Activated CD4-positive, alpha-beta T cell treated with anti-CD3 and anti-CD28 coated beads for 36 hours (primary cell): ENCODE measurements at regions of chr6 and their contacts with region 1.

Region 1: GRCh38 chr6:138692058-138692977 is 81.3 kb upstream of the CCDC28A start:
- DNase-seq: peak; percentile 74
- ATAC-seq: peak; percentile 63
- H3K4me3 Mint-ChIP-seq: peak overlapping the region; percentile 68
- H3K27ac Mint-ChIP-seq: no peak overlapping the region
- H3K4me1 Mint-ChIP-seq: peaks cover 10% of the 10 kb centered on the region
- H3K27me3 Mint-ChIP-seq: peaks cover 29% of the 10 kb centered on the region

Region 2: DNA sequence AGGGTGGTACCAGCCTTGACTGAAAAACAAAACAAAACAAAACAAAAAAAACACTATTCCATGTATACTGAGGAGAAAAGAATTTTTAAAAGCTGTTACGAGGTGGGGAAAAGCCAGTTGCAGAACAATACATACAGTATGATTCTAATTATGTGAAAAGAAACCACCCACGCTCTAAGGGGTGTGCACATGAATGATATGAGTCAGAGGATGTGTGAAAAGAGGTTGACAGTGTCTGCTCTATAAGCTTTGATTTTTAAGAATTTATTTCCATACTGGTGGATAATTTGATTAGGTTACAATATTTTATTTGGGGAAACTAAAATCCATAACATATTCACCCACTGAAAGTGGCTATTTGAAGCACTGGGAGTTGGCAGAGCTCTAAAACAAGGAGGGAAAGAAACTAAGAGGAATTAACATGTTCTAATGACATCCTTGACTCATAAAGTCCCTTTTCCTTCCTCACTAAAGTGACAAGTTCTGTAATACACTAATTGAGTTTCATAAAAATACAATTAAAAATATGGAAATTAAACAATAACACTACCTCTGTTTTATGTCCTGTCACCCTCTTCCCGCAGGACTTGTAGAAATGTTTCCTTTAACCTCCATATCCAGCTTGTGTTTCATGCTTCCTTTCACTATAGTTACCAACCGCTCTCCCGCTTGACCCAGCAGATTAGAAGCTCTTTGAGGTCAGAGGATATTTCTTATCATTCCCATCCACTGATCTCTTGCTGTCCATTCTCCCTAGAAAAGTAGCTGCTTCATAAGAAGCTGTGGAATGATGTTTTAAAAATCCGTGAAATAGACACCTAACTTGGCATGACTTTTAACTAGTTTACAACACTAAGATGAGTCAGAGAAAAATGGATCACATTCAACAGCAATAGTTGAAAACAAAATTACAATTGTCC is 37.3 kb before region 1 on chr6:
- CTCF ChIA-PET with region 1: interaction called, 3 read pairs
- POLR2A ChIA-PET with region 1: no interaction called
- intact Hi-C with region 1: loop called in 1 of 2 experiments (anchors 2 kb)
- DNase-seq: peak; percentile 66
- ATAC-seq: peak; percentile 98
- H3K4me3 Mint-ChIP-seq: no peak overlapping the region
- H3K27ac Mint-ChIP-seq: no peak overlapping the region
- H3K4me1 Mint-ChIP-seq: peaks cover 21% of the 10 kb centered on the region
- H3K27me3 Mint-ChIP-seq: peaks cover 17% of the 10 kb centered on the region

Region 3: DNA sequence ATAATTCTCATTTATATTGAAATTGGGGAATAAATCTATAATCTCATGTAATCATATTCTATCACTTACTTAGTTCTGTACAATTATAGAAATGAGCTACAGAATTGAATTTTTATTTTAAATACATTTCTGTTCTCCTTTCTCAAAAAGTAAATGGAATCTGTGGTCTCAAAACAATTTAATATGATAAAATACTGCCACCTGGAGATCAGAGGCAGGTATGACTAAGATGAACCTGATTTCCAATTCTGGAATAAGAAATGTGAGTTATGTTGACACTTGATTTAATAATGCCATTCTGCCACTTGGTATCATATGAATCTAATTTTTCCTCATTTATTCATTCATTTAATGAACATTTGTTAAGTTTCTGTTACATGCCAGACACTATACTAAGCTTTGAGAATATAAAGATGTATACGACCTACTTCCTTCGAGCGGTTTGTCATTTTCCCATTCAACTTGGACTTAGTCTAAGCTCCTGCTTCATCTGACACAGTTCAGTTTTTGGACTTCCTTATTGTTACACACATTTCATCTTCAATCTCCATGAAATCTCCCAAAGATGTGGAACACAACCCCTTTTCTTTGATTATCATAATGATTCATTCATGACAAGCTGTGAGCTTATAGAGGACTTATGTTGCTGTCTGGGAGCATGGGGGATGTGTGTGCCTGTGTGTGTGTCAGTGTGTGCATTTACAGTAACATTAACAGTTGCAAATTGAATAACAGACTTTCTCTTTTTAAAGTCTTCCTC is 73.8 kb after region 1 on chr6:
- CTCF ChIA-PET with region 1: interaction called, 4 read pairs
- POLR2A ChIA-PET with region 1: no interaction called
- intact Hi-C with region 1: loop called in 1 of 2 experiments (anchors 1 kb)
- DNase-seq: no peak
- ATAC-seq: no peak
- H3K4me3 Mint-ChIP-seq: no peak overlapping the region
- H3K27ac Mint-ChIP-seq: no peak overlapping the region
- H3K4me1 Mint-ChIP-seq: peaks cover 14% of the 10 kb centered on the region
- H3K27me3 Mint-ChIP-seq: no peaks in the 10 kb centered on the region

Region 4: GRCh38 chr6:138773177-138774091 is 81.1 kb after region 1 on chr6 and contains the start of gene CCDC28A:
- CTCF ChIA-PET with region 1: interaction called, 4 read pairs
- POLR2A ChIA-PET with region 1: no interaction called
- intact Hi-C with region 1: loop called (anchors 2 kb)
- DNase-seq: peak; percentile 95
- ATAC-seq: peak; percentile 91
- H3K4me3 Mint-ChIP-seq: peak within 1 kb of the TSS; percentile 84
- H3K27ac Mint-ChIP-seq: peak within 1 kb of the TSS; percentile 98
- H3K4me1 Mint-ChIP-seq: peaks cover 31% of the 10 kb centered on the region
- H3K27me3 Mint-ChIP-seq: no peaks in the 10 kb centered on the region
- total RNA-seq, gene CCDC28A: 14.8 to 16.8 TPM

Region 5: DNA sequence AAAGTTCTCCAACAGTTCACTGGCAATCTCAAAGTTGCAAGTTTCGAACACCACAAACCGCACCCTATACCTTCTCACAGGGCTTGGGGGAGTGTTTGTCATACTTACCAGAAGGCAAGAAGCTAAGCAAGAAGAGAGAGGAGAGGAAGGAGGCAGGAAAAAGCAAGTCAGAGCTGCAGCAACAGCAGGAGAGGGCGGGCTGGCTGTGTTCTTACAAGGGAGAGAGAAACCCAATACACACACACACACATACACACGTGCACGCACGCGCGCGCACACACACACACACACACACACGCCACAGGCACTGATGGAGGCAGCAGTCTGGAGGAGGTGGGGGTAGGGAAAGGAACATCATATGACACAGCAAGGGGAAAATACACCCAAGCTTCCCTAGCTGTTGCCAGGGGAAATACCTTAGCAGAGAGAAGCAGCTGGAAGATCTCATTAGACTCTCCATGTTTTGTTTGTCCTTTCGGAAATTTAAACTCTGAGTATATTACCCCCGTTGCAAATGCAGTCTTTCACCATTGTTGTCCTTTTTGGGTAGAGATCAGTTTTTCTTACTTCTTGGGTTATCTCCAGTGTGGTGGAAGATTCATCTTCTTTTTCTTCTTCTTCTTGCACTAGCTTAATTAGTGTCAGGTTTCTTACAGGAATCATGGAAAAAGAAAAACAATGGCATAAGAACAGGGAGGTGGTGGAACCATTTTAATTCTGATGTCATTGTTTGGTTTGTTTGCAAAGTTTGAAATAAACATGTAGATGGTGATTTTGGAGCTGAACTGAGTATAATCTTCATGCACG is 599.7 kb after region 1 on chr6 and contains the start of gene TXLNB:
- CTCF ChIA-PET with region 1: no interaction called
- POLR2A ChIA-PET with region 1: no interaction called
- intact Hi-C with region 1: no loop called
- DNase-seq: peak; percentile 92
- ATAC-seq: peak; percentile 94
- H3K4me3 Mint-ChIP-seq: peak within 1 kb of the TSS; percentile 64
- H3K27ac Mint-ChIP-seq: peak within 1 kb of the TSS; percentile 96
- H3K4me1 Mint-ChIP-seq: peaks cover 66% of the 10 kb centered on the region
- H3K27me3 Mint-ChIP-seq: no peaks in the 10 kb centered on the region
- total RNA-seq, gene TXLNB: 0.26 to 0.27 TPM

Region 6: GRCh38 chr6:139364302-139364981 is 672.1 kb after region 1 on chr6:
- CTCF ChIA-PET with region 1: interaction called, 3 read pairs
- POLR2A ChIA-PET with region 1: no interaction called
- intact Hi-C with region 1: loop called in 1 of 2 experiments (anchors 2 kb)
- DNase-seq: no peak
- ATAC-seq: peak; percentile 57
- H3K4me3 Mint-ChIP-seq: no peak overlapping the region
- H3K27ac Mint-ChIP-seq: no peak overlapping the region
- H3K4me1 Mint-ChIP-seq: peaks cover 25% of the 10 kb centered on the region
- H3K27me3 Mint-ChIP-seq: no peaks in the 10 kb centered on the region